Adrenal gland (tissue), 19 donors: ENCODE measurements at regions of chr4 and their contacts with region 1.

Region 1: DNA sequence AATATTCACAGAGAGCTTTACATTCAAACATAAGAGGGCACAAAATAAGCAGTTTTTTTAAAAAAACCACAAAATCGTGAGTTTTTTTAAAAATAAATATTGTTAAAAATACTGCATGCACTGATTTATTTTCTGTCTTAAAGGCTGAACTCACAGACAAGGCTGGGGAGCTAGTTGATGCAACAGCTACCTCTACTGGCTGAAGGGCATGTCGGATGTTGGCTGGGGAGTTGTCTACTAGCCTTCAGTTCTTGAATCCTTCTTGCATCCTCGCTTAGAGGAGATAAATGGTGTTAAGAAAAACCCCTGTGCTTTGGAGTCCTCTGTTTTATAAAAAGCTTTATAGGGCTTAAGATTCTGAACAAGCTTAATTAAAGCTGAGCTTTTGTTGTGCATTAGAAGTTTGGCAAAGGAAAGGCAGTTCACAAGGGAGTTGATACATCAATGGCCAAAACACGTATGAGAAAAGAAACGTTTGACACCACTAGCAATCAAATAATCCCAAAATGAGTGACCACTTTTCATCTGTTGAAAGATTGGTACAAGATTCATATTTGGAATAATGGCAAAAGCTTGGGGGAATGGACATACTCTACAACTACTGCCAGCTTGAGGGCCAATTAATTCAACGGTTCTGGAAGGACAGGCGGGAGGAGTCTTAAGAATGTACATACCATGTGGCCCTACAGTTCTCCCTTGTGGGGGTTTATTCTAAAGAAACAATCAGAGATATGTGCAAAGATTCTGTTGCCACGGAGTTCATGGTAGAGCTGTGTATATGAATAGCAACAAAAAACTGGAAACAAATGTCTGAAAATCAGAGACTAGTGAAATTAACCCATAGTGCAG is 94.7 kb downstream of the SEL1L3 start:
- DNase-seq: peak; percentile 64 to 85 (median 72)
- H3K4me3 ChIP-seq: no peak overlapping the region
- H3K27ac ChIP-seq: no peak overlapping the region
- H3K4me1 ChIP-seq: no peaks in the 10 kb centered on the region
- H3K27me3 ChIP-seq: peaks cover 6% of the 10 kb centered on the region
- CTCF ChIP-seq: peak; percentile 67 to 84 (median 79)
- POLR2A ChIP-seq: no peak

Region 2: DNA sequence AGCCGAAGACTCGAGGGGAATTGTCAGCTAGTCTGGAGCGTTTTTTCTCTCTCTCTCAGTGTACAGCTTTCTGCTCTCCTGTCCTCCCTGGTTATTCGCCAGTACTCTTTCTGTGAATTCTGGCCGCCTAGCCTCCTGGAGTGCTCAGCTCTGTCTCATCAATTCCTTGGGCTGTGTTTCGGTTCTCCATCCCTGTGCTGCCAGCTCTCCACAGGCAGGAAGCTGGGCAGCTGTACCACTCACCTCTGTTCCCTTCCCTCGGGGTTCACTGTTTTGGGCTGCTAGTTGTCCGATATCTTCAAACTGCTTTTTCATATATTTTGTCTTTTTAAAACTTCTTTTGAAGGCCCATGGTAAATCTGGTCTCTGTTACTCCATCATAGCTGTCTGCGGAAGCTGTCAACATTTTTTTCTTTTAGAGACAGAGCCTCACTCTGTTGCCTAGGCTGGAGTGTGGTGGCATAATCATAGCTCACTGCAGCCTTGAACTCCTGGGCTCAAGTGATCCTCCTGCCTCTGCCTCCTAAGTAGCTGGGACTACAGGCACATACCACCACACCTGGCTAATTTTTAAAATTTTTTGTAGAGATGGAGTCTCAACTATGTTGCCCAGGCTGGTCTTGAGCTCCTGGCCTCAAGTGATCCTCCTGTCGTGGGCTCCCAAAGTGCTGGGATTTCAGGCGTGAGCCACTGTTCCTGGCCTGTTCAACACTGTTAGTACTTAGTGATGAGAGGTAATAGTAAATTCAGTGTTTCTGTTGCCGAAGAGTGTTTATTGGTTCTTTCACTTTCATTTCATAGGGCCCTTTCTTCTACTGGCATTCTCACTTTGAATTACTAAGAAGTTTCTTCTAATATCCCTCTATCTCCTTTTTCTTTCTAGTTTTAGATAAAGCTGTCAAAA is 436.9 kb before region 1 on chr4:
- intact Hi-C with region 1: no loop called
- DNase-seq: no peak
- H3K4me3 ChIP-seq: peak overlapping the region in 2 of 4 donors; percentile 8 to 35
- H3K27ac ChIP-seq: peak overlapping the region; percentile 4 to 68 (median 59)
- H3K4me1 ChIP-seq: peaks cover 11 to 12% of the 10 kb centered on the region in 2 donors
- H3K27me3 ChIP-seq: no peaks in the 10 kb centered on the region
- CTCF ChIP-seq: no peak
- POLR2A ChIP-seq: no peak

Region 3: GRCh38 chr4:25439918-25440477 is 328.1 kb before region 1 on chr4:
- intact Hi-C with region 1: loop called (anchors 2 to 5 kb)
- DNase-seq: peak; percentile 60 to 85 (median 70)
- H3K4me3 ChIP-seq: no peak overlapping the region
- H3K27ac ChIP-seq: peak overlapping the region in 1 of 5 donors; percentile 40
- H3K4me1 ChIP-seq: peaks cover 5 to 17% of the 10 kb centered on the region in 2 donors
- H3K27me3 ChIP-seq: no peaks in the 10 kb centered on the region
- CTCF ChIP-seq: peak; percentile 72 to 89 (median 77)
- POLR2A ChIP-seq: no peak